H1 (cell line): ENCODE measurements at regions of chr16 and their contacts with region 1.

Region 1: DNA sequence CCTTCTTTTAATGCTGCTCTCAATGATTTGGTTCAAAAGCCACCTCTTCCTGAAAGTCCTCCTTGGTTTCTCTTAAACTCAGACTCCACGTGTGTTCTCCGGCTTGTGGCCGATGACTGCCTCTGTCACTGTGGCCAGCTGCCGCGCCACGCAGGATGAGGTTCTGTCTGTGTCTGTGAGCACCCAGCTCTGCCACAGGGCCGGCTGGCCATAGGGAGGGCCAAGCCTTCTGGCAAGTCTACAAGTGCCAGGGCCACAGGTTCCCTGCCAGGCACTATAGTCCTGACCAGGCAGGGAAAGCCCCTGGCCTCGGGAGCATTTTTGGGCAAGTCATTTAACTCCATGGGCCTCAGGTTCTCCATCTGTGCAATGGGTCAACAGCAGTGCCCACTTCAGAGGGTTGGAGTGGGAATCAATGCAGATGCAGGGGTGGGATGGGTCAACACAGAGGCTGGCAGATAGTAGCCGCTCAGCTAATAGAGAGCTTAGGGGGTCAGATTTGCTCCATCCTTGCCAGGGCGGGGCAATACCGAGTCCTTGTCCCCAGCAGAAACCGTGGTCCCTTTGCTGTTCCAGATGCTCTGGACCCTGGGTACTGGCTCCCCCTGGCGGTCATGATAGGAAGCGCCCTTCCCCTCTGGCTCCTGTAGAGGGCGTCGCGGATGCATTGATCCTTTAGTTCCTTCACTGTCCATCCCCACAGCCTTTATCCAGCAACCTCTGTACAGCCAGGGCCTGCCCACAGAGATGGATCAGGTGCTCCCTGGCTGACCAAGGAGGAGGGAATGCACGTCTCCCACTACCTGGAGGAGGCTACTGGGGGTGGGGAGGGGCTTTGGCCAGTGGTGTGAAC is 19.3 kb upstream of the ADGRG3 start:
- DNase-seq: peak; percentile 65 to 98
- H3K4me3 ChIP-seq: no peak overlapping the region
- H3K27ac ChIP-seq: no peak overlapping the region
- H3K4me1 ChIP-seq: peaks cover 0 to under 1% (median 0%) of the 10 kb centered on the region in 4 experiments; a peak in 3 of 7 replicates
- H3K27me3 ChIP-seq: 0 out of 7 replicates have a peak, but pooled peaks cover 0 to 3% (median 0%) of the 10 kb centered on the region in 4 experiments
- CTCF ChIP-seq: peak; percentile 100
- EP300 ChIP-seq: no peak
- POLR2A ChIP-seq: no peak
- RAD21 ChIP-seq: peak; percentile 99

Region 2: DNA sequence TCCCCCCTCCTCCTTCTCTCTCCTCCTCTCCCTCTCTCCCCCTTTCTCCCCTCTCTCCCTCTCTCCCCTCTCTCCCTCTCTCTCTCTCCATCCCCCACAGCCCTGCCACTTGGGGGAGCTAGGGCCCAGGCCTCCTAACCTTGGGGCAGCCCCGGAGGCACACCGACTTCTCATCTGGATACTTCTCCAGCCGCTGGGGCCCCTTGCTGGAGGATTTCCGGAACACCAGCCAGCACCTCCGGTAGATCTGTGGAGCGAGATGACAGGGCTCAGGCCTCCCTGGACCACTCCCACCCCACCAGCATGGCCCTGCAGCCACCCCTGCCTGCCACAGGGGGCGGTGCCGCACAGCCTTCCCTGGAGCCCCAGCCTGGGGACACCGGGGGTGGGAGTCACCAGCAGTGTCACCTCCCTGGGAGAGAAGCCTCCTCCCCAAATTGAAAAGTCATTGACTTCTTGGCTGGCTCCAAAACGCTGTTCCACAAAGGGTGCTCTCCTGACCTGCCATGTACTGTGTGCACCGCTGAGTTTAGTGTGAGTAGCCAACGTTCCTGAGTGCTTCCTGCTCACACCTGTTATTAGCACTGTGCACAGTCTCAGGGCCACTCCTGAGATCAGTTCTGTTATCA is 173.0 kb before region 1 on chr16:
- CTCF ChIA-PET with region 1: no interaction called
- POLR2A ChIA-PET with region 1: no interaction called
- DNase-seq: peak; percentile 77 to 91
- H3K4me3 ChIP-seq: peak overlapping the region in 1 of 4 experiments; percentile 42; a peak in 2 of 8 replicates
- H3K27ac ChIP-seq: no peak overlapping the region
- H3K4me1 ChIP-seq: peaks cover 10 to 66% (median 51%) of the 10 kb centered on the region in 4 experiments
- H3K27me3 ChIP-seq: no peaks in the 10 kb centered on the region; a peak in 1 of 7 replicates
- CTCF ChIP-seq: peak; percentile 69 to 97 (median 89)
- EP300 ChIP-seq: peak in 1 of 2 experiments; percentile 25; a peak in 1 of 3 replicates
- POLR2A ChIP-seq: no peak
- RAD21 ChIP-seq: peak; percentile 65 to 68

Region 3: DNA sequence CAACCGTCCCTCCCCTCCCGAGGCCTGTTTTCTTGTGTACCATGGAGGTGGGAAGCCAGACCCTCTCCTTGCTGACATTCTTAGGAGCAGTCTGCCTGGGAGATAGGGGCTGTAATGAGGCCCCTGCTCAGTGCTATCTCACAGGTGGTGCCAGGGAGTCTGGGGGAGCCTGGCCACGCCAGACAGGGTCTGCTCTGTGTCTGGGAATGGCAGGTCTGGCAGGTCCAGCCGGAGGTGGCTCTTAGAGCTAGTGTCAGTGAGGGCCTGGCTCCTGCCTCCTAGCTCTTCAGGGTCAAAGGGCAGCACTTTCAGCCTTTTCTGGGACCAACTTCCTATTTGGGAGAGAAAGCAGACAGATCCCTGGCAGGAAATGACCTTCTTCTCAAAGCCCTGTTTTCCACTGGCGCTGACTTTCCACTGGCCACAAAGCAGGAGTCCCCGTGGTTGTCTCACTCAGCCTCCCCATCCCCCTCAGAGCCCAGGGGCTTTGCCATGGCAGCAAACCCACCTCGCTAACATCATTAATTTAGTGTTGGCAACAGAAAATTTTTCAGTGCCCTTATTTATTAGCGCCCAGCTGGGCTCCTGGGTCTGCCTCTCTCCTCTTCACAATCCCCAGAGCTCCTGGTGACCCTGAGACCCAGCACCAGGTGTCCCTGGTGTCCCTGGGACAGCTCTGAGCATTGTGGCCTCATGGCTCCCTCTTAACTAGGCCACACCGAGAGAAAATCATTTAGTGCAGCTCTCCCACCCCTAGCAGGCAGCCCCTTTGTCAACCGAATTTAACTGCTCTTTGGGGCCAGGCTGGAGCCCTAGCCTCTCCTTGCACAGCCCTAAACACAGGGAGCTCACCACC is 138.6 kb before region 1 on chr16:
- CTCF ChIA-PET with region 1: no interaction called
- POLR2A ChIA-PET with region 1: no interaction called
- DNase-seq: no peak
- H3K4me3 ChIP-seq: no peak overlapping the region
- H3K27ac ChIP-seq: no peak overlapping the region
- H3K4me1 ChIP-seq: peaks cover 0 to 15% (median 7%) of the 10 kb centered on the region in 4 experiments; a peak in 6 of 7 replicates
- H3K27me3 ChIP-seq: no peaks in the 10 kb centered on the region
- CTCF ChIP-seq: no peak
- EP300 ChIP-seq: no peak
- POLR2A ChIP-seq: no peak
- RAD21 ChIP-seq: no peak

Region 4: GRCh38 chr16:57591086-57591869 is 57.5 kb before region 1 on chr16:
- CTCF ChIA-PET with region 1: interaction called, 122 read pairs
- POLR2A ChIA-PET with region 1: interaction called, 3 read pairs
- DNase-seq: peak in 1 of 2 experiments; percentile 88
- H3K4me3 ChIP-seq: no peak overlapping the region
- H3K27ac ChIP-seq: no peak overlapping the region
- H3K4me1 ChIP-seq: no peaks in the 10 kb centered on the region; a peak in 1 of 7 replicates
- H3K27me3 ChIP-seq: peaks cover 0 to 4% (median under 1%) of the 10 kb centered on the region in 4 experiments; a peak in 2 of 7 replicates
- CTCF ChIP-seq: peak; percentile 84 to 99 (median 96)
- EP300 ChIP-seq: no peak
- POLR2A ChIP-seq: no peak
- RAD21 ChIP-seq: peak; percentile 88 to 93

Region 5: GRCh38 chr16:57609541-57610401 is 39.0 kb before region 1 on chr16:
- CTCF ChIA-PET with region 1: interaction called, 111 read pairs
- POLR2A ChIA-PET with region 1: no interaction called
- DNase-seq: peak in 1 of 2 experiments; percentile 41
- H3K4me3 ChIP-seq: no peak overlapping the region
- H3K27ac ChIP-seq: no peak overlapping the region
- H3K4me1 ChIP-seq: no peaks in the 10 kb centered on the region
- H3K27me3 ChIP-seq: 0 out of 7 replicates have a peak, but pooled peaks cover 0 to 2% (median 0%) of the 10 kb centered on the region in 4 experiments
- CTCF ChIP-seq: peak; percentile 19 to 33 (median 29)
- EP300 ChIP-seq: no peak
- POLR2A ChIP-seq: no peak
- RAD21 ChIP-seq: peak; percentile 33 to 49; a peak in 3 of 4 replicates

Region 6: GRCh38 chr16:57628008-57628781 is 20.6 kb before region 1 on chr16 and contains the start of gene ADGRG1:
- CTCF ChIA-PET with region 1: interaction called, 104 read pairs
- POLR2A ChIA-PET with region 1: interaction called, 6 read pairs
- DNase-seq: peak; percentile 65 to 72
- H3K4me3 ChIP-seq: peak within 1 kb of the TSS in 1 of 4 experiments; percentile 49; a peak in 2 of 8 replicates
- H3K27ac ChIP-seq: no peak within 1 kb of the TSS
- H3K4me1 ChIP-seq: peaks cover 0 to 21% (median 15%) of the 10 kb centered on the region in 4 experiments; a peak in 6 of 7 replicates
- H3K27me3 ChIP-seq: peaks cover 0 to 2% (median 0%) of the 10 kb centered on the region in 4 experiments; a peak in 2 of 7 replicates
- CTCF ChIP-seq: peak; percentile 15 to 38 (median 26); a peak in 3 of 4 replicates
- EP300 ChIP-seq: no peak
- POLR2A ChIP-seq: no peak
- RAD21 ChIP-seq: peak in 1 of 2 experiments; percentile 21; a peak in 1 of 4 replicates
- total RNA-seq, gene ADGRG1: 0.78 and 1.3 TPM in 2 replicates

Region 7: DNA sequence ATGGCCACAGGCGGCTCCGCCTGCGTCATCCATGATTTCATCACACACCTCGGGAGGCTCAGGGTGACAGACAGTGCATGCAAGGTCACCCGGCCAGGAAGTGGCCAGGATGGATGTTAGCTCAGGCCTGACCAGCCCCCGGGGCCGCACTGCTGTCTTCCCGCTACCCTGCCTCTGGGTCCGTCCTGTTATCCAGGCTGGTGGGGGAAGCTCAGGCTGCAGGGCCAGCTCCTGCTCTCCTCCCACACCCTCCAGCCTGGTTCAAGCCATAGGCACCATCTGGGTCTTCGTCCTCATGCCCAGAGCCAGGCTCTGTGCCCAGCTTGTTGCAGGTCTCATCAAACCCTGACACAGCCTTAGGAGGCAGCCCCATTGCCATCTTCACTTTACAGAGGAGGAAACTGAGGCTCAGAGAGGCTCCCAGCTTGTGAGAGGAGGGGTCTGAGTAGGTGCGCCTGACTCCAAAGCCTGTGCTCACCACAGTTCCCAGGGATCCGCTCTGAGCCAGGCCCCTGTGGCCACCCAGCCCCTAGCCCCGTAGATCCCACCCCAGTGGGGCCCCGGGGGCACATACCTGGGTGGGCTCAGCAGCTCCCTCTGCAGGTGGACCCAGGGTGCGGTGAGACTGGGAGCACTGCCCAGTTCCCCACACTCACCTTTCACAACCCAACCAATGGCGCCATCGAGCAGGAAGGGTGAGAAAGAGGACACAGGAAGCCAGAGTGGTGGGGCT is 18.9 kb after region 1 on chr16:
- CTCF ChIA-PET with region 1: interaction called, 47 read pairs
- POLR2A ChIA-PET with region 1: no interaction called
- DNase-seq: peak in 1 of 2 experiments; percentile 75
- H3K4me3 ChIP-seq: no peak overlapping the region
- H3K27ac ChIP-seq: no peak overlapping the region
- H3K4me1 ChIP-seq: peaks cover 0 to 4% (median 0%) of the 10 kb centered on the region in 4 experiments; a peak in 3 of 7 replicates
- H3K27me3 ChIP-seq: no peaks in the 10 kb centered on the region
- CTCF ChIP-seq: peak; percentile 64 to 68 (median 65)
- EP300 ChIP-seq: no peak
- POLR2A ChIP-seq: no peak
- RAD21 ChIP-seq: peak; percentile 20 to 47; a peak in 3 of 4 replicates

Region 8: DNA sequence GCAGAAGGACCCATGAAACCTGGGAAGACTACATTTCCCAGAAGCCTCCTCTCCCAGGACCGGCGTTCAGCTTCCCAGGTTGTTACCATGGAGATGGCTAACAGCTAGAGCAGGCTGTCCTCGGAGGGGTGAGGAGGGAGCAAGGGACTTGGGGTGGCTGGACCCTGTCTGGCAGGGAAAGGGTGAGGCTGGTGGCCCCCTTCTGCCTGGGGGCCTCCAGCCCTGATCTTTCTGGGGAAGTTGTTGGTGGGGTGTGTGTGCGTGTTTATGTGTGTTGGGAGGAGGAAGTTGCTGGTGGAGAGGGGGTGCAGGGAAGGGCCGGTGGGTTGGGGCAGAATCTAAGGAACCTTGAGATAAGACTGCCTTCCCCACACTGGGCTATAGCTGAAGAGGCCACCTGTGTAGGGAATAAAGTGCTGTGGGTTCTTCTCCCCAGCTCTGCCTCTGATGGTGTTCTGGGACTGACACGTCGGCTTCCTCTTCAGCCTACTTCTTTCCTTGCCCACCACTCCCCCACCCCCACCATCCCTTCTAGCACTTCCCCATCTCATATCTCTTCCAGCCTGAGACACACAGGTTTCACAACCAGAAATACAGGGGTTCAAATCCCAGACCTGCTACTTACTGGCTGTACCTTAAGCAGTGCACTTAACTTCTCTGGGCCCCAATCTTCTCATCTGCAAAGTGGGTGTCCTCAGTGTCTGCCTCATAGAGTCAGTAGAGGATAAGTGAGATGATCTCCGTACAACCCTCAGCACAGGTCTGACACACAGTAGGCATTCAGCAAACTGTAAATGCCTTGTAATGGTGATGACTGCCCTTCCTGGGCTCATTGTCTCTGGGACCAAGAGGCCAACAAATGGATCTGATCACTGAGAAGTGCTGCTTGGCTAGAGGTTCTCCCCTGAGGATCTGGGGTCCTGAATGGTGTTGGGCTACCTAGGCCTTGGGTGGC is 46.2 kb after region 1 on chr16 and contains the start of gene DRC7:
- CTCF ChIA-PET with region 1: interaction called, 12 read pairs
- POLR2A ChIA-PET with region 1: no interaction called
- DNase-seq: peak; percentile 19 to 64
- H3K4me3 ChIP-seq: peak within 1 kb of the TSS in 1 of 4 experiments; percentile 40; a peak in 3 of 8 replicates
- H3K27ac ChIP-seq: no peak within 1 kb of the TSS
- H3K4me1 ChIP-seq: no peaks in the 10 kb centered on the region; a peak in 1 of 7 replicates
- H3K27me3 ChIP-seq: no peaks in the 10 kb centered on the region
- CTCF ChIP-seq: no peak
- EP300 ChIP-seq: no peak
- POLR2A ChIP-seq: no peak
- RAD21 ChIP-seq: no peak
- total RNA-seq, gene DRC7: not detected in 2 replicates

Region 9: DNA sequence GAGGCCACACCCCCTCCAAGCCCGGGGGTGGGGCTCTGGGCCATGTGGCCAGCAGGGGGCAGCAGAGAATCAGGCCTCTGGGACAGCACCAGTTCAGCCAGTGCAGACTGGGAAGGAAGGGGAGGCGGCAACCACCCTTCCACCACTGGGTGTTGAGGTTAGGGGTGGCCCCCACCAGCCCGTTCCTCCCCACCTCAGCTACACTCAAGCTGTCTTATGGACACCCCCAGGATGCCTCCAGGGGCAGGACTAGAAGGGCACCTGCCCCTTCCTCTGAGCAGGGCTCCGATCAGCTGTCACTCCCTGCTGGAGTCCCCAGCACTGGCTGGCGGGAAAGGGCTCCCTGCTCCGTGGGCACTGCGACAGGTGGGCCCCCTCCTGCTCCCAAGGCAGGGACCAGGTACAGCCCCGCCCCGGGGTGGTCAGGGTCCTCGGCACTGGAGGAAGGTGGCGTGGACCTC is 108.5 kb after region 1 on chr16:
- CTCF ChIA-PET with region 1: interaction called, 18 read pairs
- POLR2A ChIA-PET with region 1: no interaction called
- DNase-seq: peak in 1 of 2 experiments; percentile 99
- H3K4me3 ChIP-seq: no peak overlapping the region
- H3K27ac ChIP-seq: no peak overlapping the region
- H3K4me1 ChIP-seq: peaks cover 0 to 12% (median 7%) of the 10 kb centered on the region in 4 experiments; a peak in 4 of 7 replicates
- H3K27me3 ChIP-seq: no peaks in the 10 kb centered on the region; a peak in 1 of 7 replicates
- CTCF ChIP-seq: peak; percentile 89 to 93 (median 91)
- EP300 ChIP-seq: no peak
- POLR2A ChIP-seq: no peak
- RAD21 ChIP-seq: peak; percentile 86 to 91